BJ (cell line): ENCODE measurements at regions of chr1 and their contacts with region 1.

Region 1: DNA sequence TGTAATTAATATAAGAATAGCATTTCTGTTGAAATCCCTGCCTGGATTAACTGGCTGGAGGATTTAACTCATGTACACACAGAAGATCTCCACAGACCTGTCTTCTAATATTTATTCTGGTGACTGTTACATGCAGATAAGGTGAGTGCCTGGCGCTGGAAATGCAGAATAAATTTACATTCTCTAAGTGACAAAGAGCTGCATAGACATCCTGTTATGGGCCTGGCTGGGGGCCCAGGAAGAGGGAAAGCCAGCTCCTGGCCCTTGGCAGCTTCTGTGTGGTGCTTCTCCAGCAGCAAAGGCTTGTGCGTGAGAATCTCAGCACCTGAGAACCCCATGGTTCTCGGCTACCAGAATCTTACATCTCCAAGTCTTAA is 446.6 kb downstream of the PTPRU start:
- DNase-seq: no peak
- H3K4me3 ChIP-seq: no peak overlapping the region
- H3K27me3 ChIP-seq: no peaks in the 10 kb centered on the region
- CTCF ChIP-seq: no peak

Region 2: GRCh38 chr1:29011775-29012174 is 671.1 kb before region 1 on chr1:
- CTCF ChIA-PET with region 1: no interaction called
- POLR2A ChIA-PET with region 1: interaction called, 11 read pairs
- DNase-seq: no peak
- H3K4me3 ChIP-seq: no peak overlapping the region
- H3K27me3 ChIP-seq: no peaks in the 10 kb centered on the region
- CTCF ChIP-seq: no peak